GM12878 (cell line): ENCODE measurements at regions of chr17 and their contacts with region 1.

Region 1: DNA sequence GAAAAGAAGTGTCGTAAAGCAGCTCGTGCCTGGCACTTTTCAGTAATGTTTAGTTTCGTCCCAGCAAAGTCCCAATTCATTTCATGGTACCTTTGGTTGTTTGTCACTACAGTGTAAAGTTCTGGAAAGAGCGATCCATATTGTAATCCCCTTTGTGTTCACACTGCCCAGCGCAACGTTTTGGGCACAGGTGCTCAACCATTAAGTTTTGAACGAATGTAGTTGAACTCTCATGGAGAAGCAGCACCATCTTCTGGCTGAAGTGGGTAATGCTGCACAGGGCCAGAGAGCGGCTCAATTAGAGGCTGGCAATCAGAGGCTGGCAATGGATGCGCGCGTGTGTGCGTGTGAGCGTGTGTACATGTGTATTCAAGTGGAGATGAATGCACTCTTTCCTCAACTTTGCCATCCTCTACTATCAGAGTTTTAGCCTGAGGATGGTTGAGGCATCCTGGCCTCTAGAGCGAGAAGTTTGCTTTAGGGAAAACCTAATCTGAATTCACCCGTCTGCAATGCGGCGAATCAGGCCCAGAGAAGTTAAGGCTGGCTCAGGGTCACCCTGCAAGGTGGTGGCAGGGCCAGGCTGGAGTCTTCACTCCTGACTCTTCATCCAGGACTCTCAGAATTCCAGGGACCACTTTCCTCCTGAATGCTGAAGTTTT is 29.9 kb downstream of the DYNLL2 start:
- DNase-seq: peak; percentile 37
- ATAC-seq: peak; percentile 92
- H3K4me3 ChIP-seq: no peak overlapping the region
- H3K27ac ChIP-seq: no peak overlapping the region
- H3K4me1 ChIP-seq: no peaks in the 10 kb centered on the region
- H3K27me3 ChIP-seq: peaks cover 0 to 3% of the 10 kb centered on the region in 2 experiments; a peak in 1 of 4 replicates
- CTCF ChIP-seq: peak; percentile 93 to 99 (median 98); a peak in 5 of 6 replicates
- EP300 ChIP-seq: no peak
- POLR2A ChIP-seq: no peak
- RAD21 ChIP-seq: peak; percentile 96

Region 2: DNA sequence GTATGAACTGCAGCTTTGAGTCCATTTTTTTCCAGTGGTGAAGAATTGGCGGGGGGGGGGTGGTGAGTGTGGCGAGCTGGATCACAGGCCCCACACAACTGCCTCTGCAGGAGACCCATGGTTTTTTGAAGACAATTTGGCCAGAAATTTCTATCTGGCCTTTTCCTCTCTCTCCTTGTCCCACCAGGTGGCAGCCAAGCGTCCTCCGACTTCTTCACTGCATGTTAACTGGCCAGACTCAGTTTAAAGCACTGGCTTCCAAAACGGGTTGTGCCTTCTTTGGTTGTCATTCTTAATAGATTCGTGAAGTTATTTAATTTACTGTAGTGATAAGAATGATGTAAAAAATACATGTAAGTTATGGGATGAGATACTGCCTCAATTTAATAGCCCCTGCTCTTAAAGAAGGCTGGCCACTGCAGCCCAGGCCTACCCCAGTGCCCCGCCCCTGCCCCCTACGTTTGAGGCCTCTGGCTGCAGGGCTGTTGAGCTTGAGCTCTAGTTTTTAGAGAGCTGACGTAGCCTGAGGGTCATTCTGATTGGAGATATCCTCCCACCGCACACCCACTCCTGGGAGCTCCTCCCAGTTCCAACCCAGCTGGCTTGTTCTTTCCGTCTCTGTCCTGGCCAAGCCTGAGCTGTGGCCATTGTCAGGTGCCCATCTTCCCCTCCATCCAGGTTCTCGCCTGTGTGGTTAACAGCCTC is 991.6 kb before region 1 on chr17:
- CTCF ChIA-PET with region 1: no interaction called
- POLR2A ChIA-PET with region 1: no interaction called
- RAD21 ChIA-PET with region 1: no interaction called
- SMC1A ChIA-PET with region 1: no interaction called
- in situ Hi-C with region 1: no loop called
- intact Hi-C with region 1: loop called (anchors 5 kb)
- DNase-seq: no peak
- ATAC-seq: peak; percentile 56; the same call in 2 of the 3 replicates
- H3K4me3 ChIP-seq: no peak overlapping the region
- H3K27ac ChIP-seq: no peak overlapping the region
- H3K4me1 ChIP-seq: no peaks in the 10 kb centered on the region
- H3K27me3 ChIP-seq: no peaks in the 10 kb centered on the region
- CTCF ChIP-seq: peak; percentile 38 to 44 (median 41); a peak in 5 of 6 replicates
- EP300 ChIP-seq: no peak
- POLR2A ChIP-seq: no peak
- RAD21 ChIP-seq: peak; percentile 31

Region 3: DNA sequence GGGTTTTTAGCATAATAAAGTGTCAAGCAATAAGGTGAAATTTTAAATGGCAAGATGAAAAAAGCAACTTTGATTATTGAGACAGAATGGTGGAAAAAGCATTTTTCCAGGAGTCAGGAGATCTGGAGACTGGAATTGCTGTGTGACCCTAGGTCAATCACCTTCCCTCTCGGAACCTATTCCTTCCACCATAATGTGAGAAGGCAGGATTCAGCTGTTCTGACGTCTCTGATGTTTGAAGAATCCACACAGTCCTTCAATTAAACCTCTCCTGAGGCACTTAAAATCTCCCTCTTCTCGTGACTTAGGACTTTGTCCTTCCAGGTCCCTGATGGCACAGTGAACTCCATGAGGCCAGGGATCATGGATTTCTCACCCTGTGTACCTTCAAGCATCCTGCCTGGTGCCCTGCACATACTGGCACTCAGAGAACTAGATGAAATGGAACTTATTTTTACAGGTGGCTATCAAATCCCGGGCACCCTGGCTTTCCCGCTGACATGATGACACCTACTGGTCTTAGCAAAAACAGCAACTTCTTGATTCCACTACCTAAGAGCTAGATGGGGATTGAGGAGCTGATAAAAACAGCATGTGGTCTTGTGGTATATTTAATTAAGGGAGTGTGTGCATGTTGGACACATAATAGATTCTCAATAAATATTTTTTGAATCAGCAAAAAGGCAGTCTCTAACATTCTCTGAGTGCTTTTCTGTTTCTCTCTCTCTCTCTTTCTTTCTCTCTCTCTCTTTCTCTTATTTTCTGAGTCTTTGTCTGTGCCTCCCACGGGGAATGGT is 365.7 kb before region 1 on chr17:
- CTCF ChIA-PET with region 1: interaction called, 3 read pairs
- POLR2A ChIA-PET with region 1: no interaction called
- RAD21 ChIA-PET with region 1: no interaction called
- SMC1A ChIA-PET with region 1: no interaction called
- in situ Hi-C with region 1: no loop called
- intact Hi-C with region 1: loop called (anchors 1 kb)
- DNase-seq: no peak
- ATAC-seq: peak; percentile 83
- H3K4me3 ChIP-seq: no peak overlapping the region
- H3K27ac ChIP-seq: no peak overlapping the region
- H3K4me1 ChIP-seq: peaks cover 12% of the 10 kb centered on the region
- H3K27me3 ChIP-seq: no peaks in the 10 kb centered on the region; a peak in 2 of 4 replicates
- CTCF ChIP-seq: peak; percentile 79 to 87 (median 84)
- EP300 ChIP-seq: no peak
- POLR2A ChIP-seq: no peak
- RAD21 ChIP-seq: peak; percentile 94

Region 4: GRCh38 chr17:58006924-58007780 is 105.9 kb before region 1 on chr17 and contains the start of gene SRSF1:
- CTCF ChIA-PET with region 1: interaction called, 63 read pairs
- POLR2A ChIA-PET with region 1: no interaction called
- RAD21 ChIA-PET with region 1: interaction called, 3 read pairs
- SMC1A ChIA-PET with region 1: no interaction called
- in situ Hi-C with region 1: no loop called
- intact Hi-C with region 1: loop called (anchors 2 kb)
- DNase-seq: peak; percentile 97
- ATAC-seq: peak; percentile 91
- H3K4me3 ChIP-seq: peak within 1 kb of the TSS; percentile 98
- H3K27ac ChIP-seq: peak within 1 kb of the TSS; percentile 96
- H3K4me1 ChIP-seq: peaks cover 8% of the 10 kb centered on the region; the same call in 1 of the 2 replicates
- H3K27me3 ChIP-seq: no peaks in the 10 kb centered on the region
- CTCF ChIP-seq: no peak
- EP300 ChIP-seq: peak in 1 of 2 experiments; percentile 62; a peak in 2 of 4 replicates
- POLR2A ChIP-seq: peak; percentile 99
- RAD21 ChIP-seq: no peak
- polyA plus RNA-seq, gene SRSF1: 101 to 104 TPM

Region 5: GRCh38 chr17:58100506-58100905 is 12.6 kb before region 1 on chr17:
- CTCF ChIA-PET with region 1: interaction called, 25 read pairs
- POLR2A ChIA-PET with region 1: no interaction called
- RAD21 ChIA-PET with region 1: no interaction called
- SMC1A ChIA-PET with region 1: interaction called, 7 read pairs
- in situ Hi-C with region 1: no loop called
- intact Hi-C with region 1: no loop called
- DNase-seq: no peak
- ATAC-seq: no peak
- H3K4me3 ChIP-seq: no peak overlapping the region
- H3K27ac ChIP-seq: no peak overlapping the region
- H3K4me1 ChIP-seq: no peaks in the 10 kb centered on the region
- H3K27me3 ChIP-seq: no peaks in the 10 kb centered on the region
- CTCF ChIP-seq: no peak
- EP300 ChIP-seq: no peak
- POLR2A ChIP-seq: no peak
- RAD21 ChIP-seq: no peak

Region 6: DNA sequence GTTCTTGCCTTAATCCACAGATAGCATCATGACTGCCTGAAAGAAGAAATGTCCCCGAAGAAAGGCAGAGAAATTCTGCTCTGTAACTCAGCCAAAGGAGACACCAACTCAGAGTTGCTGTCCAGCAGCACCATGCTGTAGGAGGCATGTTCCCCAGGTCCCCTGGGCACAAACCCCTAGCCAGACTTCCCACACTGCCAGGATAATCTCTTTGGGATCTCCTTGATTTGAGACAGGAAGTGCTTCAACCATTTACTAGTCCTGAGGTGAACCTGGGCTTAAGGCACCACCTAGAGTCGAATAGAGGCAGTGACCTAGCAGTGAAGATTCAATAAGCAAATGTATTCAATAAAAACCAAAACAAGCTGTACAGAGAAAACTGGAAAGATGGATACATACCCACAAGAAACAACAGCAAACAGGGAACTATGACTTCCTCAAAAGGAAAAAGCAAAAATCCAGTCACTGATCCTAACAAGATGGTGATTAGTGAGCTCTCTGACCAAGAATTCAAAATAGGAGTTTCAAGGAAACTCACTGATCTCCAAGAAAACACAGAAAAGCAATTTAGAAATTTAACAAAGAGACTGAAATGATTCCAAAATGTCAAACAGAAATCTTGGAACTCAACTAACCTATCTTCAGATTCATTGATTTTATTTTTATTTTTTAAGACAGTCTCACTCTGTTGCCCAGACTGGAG is 59.4 kb after region 1 on chr17:
- CTCF ChIA-PET with region 1: interaction called, 3 read pairs
- POLR2A ChIA-PET with region 1: no interaction called
- RAD21 ChIA-PET with region 1: no interaction called
- SMC1A ChIA-PET with region 1: no interaction called
- in situ Hi-C with region 1: no loop called
- intact Hi-C with region 1: loop called (anchors 5 kb)
- DNase-seq: peak; percentile 3
- ATAC-seq: peak; percentile 78
- H3K4me3 ChIP-seq: no peak overlapping the region
- H3K27ac ChIP-seq: no peak overlapping the region
- H3K4me1 ChIP-seq: no peaks in the 10 kb centered on the region
- H3K27me3 ChIP-seq: no peaks in the 10 kb centered on the region; a peak in 2 of 4 replicates
- CTCF ChIP-seq: peak; percentile 49 to 57 (median 56); a peak in 5 of 6 replicates
- EP300 ChIP-seq: no peak
- POLR2A ChIP-seq: no peak
- RAD21 ChIP-seq: peak; percentile 56

Region 7: DNA sequence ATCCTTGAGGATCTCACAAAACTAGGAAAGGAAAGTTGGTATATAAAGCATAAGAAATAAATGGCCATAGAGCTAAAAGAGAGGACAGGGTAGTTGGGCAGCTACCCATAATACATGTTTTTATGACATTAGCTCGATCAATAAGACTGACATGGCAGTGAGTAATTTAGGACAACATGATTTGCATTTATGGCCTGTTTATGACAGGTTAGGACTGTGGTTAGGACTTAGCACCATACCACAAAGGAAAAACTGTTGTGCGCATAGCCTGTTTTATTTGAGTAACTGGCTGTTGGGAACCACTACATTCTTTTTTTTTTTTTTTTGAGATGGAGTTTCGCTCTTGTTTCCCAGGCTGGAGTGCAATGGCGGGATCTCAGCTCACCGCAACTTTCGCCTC is 1011.6 kb after region 1 on chr17:
- CTCF ChIA-PET with region 1: no interaction called
- POLR2A ChIA-PET with region 1: no interaction called
- RAD21 ChIA-PET with region 1: no interaction called
- SMC1A ChIA-PET with region 1: no interaction called
- in situ Hi-C with region 1: no loop called
- intact Hi-C with region 1: no loop called
- DNase-seq: peak; percentile 41
- ATAC-seq: peak; percentile 67
- H3K4me3 ChIP-seq: no peak overlapping the region
- H3K27ac ChIP-seq: peak overlapping the region; percentile 44
- H3K4me1 ChIP-seq: peaks cover 9% of the 10 kb centered on the region
- H3K27me3 ChIP-seq: no peaks in the 10 kb centered on the region
- CTCF ChIP-seq: no peak
- EP300 ChIP-seq: no peak
- POLR2A ChIP-seq: no peak
- RAD21 ChIP-seq: no peak